ENCODE measurements at regions of chr7 and their contacts with region 1.

Region 1: GRCh38 chr7:129091484-129092002 is 36.6 kb upstream of the TNPO3 start:
- DNase-seq: peak; percentile 15
- H3K4me3 ChIP-seq: no peak overlapping the region
- H3K27ac ChIP-seq: no peak overlapping the region
- H3K27me3 ChIP-seq: peaks cover 6% of the 10 kb centered on the region
- CTCF ChIP-seq: peak; percentile 99

Region 2: DNA sequence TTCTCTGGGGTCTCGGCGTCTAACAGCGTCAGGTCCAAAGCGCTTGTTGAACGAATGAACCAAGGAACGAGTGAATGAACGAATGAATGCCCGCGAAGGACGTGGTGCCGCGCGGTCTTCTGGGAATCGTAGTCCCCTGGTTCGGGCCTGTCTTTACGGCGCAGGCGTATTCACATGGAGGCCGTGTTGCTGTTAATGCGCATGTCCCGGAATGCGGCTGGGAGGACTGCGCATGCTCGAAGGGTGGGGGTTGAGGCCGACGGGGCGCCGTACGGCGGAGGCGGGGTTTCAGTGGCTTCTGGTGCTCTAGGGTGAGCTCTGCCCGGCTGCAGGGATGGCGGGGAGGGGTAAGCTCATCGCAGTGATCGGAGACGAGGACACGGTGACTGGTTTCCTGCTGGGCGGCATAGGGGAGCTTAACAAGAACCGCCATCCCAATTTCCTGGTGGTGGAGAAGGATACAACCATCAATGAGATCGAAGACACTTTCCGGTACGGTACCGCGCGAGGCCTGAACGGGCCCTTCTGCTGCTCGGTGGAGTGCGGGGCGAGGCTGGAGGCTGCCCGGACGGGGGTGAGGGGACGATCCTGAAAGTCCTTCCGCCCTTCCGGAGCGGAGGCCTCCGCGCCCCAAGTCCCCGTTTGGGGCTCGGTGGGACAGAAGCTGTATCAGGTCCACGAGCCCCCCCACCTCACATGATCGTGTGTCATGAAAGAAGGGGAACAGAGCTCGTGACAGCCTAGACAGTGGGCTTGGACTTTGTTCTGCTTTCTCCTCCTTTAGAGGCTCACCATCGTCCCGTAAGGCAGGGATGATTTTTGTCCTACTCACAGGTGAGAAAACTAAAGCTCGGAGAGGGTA is 228.7 kb before region 1 on chr7 and contains the start of gene ATP6V1F:
- CTCF ChIA-PET with region 1: interaction called, 16 read pairs
- POLR2A ChIA-PET with region 1: no interaction called
- DNase-seq: peak; percentile 92
- H3K4me3 ChIP-seq: peak within 1 kb of the TSS; percentile 98
- H3K27ac ChIP-seq: peak within 1 kb of the TSS; percentile 73
- H3K27me3 ChIP-seq: no peaks in the 10 kb centered on the region
- CTCF ChIP-seq: no peak
- polyA plus RNA-seq, gene ATP6V1F: 150 and 193 TPM in 2 replicates

Region 3: GRCh38 chr7:128899392-128899791 is 192.2 kb before region 1 on chr7:
- CTCF ChIA-PET with region 1: interaction called, 43 read pairs
- POLR2A ChIA-PET with region 1: no interaction called
- DNase-seq: no peak
- H3K4me3 ChIP-seq: no peak overlapping the region
- H3K27ac ChIP-seq: no peak overlapping the region
- H3K27me3 ChIP-seq: peaks cover 9% of the 10 kb centered on the region
- CTCF ChIP-seq: no peak

Region 4: GRCh38 chr7:128909625-128910257 is 181.8 kb before region 1 on chr7:
- CTCF ChIA-PET with region 1: interaction called, 43 read pairs
- POLR2A ChIA-PET with region 1: no interaction called
- DNase-seq: peak; percentile 10
- H3K4me3 ChIP-seq: peak overlapping the region; percentile 59
- H3K27ac ChIP-seq: no peak overlapping the region
- H3K27me3 ChIP-seq: peaks cover 49% of the 10 kb centered on the region
- CTCF ChIP-seq: no peak

Region 5: DNA sequence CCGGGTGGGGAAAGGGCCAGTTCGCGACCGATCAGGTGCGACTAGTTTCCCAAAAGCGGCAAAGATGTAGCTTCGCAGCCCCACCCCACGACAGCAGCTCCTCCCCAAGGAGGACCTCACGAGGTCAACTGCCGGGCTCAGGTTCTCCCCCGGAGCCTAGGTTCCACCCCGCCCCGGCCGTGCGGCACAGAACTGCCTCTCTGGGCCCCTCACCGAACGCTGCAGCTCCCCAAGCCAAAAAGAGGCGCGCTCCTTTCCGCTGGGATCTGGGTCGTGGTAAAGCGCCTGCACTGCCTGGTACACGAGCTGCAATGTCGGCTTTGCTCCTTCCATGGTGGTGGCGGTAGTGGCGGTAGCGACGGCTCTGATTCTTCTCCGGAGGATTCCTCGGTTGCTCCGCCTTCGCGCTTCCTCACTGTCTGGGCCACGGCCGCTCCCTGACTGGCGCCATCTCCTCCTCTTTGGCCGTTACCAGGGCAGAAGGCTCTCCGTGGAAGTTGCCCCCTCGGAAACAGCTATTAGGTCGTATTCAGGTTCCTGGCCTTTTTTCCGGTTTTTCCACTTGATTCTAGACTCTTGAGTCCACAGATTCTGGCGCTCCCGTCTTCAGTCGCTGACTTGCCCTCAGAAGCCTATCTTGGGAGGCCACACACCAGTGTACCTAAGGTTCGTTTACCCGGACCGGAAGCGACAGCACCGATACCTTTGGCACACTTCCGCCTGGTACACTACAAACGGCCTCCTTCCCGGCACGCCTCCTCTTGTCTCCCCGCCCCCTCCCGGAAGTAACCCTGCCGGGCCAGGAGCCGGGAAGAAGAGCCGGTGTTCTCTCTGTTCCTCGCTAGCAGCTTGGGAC is 36.9 kb before region 1 on chr7 and contains the start of gene TNPO3:
- CTCF ChIA-PET with region 1: interaction called, 11 read pairs
- POLR2A ChIA-PET with region 1: no interaction called
- DNase-seq: peak; percentile 72
- H3K4me3 ChIP-seq: peak within 1 kb of the TSS; percentile 99
- H3K27ac ChIP-seq: peak within 1 kb of the TSS; percentile 99
- H3K27me3 ChIP-seq: peaks cover 3% of the 10 kb centered on the region
- CTCF ChIP-seq: peak; percentile 2; the same call in 1 of the 2 replicates
- polyA plus RNA-seq, gene TNPO3: 45.5 and 49.5 TPM in 2 replicates

Region 6: GRCh38 chr7:129073738-129074137 is 17.8 kb before region 1 on chr7:
- CTCF ChIA-PET with region 1: interaction called, 10 read pairs
- POLR2A ChIA-PET with region 1: no interaction called
- DNase-seq: no peak
- H3K4me3 ChIP-seq: no peak overlapping the region
- H3K27ac ChIP-seq: no peak overlapping the region
- H3K27me3 ChIP-seq: peaks cover 22% of the 10 kb centered on the region
- CTCF ChIP-seq: no peak

Region 7: DNA sequence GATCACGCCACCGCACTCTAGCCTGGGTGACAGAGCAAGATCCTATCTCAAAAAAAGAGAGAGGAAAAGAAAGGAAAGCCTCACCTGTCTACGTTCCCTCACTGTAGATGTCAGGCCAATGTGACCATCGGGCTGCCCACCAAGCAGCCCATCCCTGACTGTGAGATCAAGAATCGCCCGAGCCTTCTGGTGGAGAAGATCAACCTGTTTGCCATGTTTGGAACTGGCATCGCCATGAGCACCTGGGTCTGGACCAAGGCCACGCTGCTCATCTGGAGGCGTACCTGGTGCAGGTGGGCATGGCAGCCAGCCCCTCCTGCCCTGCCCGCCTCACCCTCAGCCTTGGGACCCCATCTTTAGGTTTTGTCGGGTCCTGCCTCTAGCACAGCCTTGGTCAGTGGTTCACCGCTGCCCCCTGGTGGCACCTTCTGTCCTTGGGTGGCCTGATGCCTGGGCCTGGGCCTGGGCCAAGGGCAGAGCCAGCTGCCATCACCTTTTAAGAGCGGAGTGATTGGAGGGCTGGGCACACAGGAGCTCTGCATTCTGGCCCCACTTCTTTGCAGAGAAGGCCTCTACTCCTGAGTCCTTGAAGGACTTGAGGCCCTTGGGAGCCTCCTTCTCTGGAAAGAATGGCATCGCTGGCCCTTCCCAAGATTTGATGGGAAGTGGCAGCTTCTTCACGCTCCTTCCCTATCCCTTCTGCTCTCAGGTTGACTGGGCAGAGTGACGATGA is 118.9 kb after region 1 on chr7:
- CTCF ChIA-PET with region 1: interaction called, 13 read pairs
- POLR2A ChIA-PET with region 1: no interaction called
- DNase-seq: no peak
- H3K4me3 ChIP-seq: no peak overlapping the region
- H3K27ac ChIP-seq: no peak overlapping the region
- H3K27me3 ChIP-seq: no peaks in the 10 kb centered on the region
- CTCF ChIP-seq: peak; percentile 82

Region 8: DNA sequence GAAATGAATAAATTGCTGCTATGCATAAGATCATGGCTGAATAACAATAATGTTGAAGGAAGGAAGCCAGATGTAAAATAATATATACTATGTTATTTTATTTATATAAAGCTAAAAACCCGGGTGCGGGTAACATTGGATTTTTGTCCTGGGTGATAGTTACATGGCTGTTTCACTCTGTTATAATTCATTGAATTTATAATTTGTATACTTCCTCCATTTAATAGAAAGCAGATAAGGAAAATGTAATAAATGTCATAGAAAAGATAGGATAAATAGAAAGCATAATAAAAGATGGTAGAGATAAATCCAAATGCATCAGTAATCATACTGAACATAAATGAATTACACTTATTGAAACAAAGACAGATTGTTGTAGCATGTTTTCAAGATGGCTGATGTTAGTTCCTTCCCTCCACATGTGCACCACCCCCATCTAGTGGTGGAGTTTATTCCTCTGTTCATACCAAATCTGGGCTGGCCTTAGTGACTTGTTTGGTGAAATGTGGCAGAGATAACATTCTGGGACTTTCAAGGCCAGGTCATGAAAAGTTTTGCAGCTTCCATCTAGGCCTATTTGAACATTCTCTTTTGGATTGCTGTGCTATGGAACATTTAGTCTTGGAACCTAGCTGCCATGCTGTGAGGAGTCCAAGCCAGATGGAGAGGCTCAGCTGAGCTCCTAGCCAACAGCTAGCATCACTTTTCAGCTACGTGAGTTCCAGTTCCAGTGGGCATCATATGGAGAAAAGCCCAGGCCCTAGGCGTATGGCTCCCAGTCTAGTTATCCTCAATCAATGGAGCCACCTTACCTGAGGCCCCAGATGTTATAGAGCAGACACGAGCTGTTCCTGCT is 180.2 kb after region 1 on chr7:
- CTCF ChIA-PET with region 1: no interaction called
- POLR2A ChIA-PET with region 1: no interaction called
- DNase-seq: peak; percentile 6
- H3K4me3 ChIP-seq: no peak overlapping the region
- H3K27ac ChIP-seq: no peak overlapping the region
- H3K27me3 ChIP-seq: no peaks in the 10 kb centered on the region
- CTCF ChIP-seq: peak; percentile 60

Region 9: DNA sequence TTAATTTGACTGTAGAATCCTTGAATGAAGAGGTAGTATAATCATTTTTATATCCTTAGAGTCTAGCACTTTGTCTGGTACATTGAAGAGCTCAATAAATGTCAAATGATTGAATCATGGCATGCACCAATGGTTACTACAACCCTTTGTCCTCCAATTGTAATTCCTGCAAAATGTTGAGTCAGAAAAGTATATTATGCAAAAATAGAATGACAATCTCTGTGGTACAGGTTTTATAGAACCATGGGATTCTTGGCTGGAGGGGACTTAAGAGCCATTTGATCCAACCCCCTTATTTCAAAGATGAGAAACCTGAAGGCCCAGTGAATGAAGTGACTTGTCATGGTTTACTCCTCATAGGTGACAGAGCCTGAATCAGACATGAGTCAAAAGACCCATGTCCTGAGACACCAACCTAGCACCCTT is 379.9 kb after region 1 on chr7:
- CTCF ChIA-PET with region 1: no interaction called
- POLR2A ChIA-PET with region 1: no interaction called
- DNase-seq: no peak
- H3K4me3 ChIP-seq: no peak overlapping the region
- H3K27ac ChIP-seq: no peak overlapping the region
- H3K27me3 ChIP-seq: no peaks in the 10 kb centered on the region
- CTCF ChIP-seq: no peak

Measured in AG04450 (cell line).